ENCODE measurements at regions of chr3 and their contacts with region 1.

Region 1: DNA sequence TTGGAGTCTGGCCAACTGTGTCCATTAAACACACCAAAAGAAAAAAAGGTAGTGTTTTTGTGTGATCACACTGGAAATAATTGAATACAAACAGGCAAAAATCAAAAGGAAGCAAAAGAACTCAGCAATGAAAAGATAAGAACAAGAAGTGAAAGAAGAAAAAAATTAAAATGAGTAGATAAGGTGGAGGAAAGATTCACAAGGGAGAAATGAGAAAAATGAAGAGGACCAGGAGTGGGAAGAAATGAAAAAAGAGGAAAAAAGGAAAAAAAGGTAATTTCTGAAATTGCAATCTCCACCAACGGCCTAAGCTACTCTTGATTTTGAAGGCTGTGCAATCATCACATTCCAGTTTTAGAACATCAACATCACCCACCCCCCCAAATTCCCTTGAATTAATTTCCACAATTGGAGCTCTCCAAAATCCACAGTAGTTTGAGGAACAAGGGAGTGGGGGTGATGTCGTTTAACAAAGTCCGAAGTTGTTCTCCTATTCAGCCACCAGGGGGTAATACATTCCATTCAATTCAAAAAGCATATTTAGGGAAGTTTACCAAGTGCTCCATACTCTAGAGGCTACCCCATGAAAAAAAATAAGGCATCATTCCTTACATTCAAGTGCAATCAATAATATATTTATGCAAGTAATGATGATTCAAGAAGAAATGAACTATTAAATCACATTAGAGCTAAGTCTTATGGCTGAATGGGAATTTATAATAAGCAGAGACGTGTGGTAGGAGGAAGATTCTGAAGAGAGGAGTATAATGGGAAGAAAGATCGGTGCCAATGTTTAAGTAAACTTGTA is 37.4 kb downstream of the ZNF860 start:
- DNase-seq: no peak
- H3K4me3 ChIP-seq: no peak overlapping the region
- H3K27ac ChIP-seq: no peak overlapping the region
- H3K4me1 ChIP-seq: no peaks in the 10 kb centered on the region
- H3K27me3 ChIP-seq: no peaks in the 10 kb centered on the region
- CTCF ChIP-seq: peak; percentile 12 to 69 (median 64)
- EP300 ChIP-seq: no peak
- POLR2A ChIP-seq: no peak

Region 2: DNA sequence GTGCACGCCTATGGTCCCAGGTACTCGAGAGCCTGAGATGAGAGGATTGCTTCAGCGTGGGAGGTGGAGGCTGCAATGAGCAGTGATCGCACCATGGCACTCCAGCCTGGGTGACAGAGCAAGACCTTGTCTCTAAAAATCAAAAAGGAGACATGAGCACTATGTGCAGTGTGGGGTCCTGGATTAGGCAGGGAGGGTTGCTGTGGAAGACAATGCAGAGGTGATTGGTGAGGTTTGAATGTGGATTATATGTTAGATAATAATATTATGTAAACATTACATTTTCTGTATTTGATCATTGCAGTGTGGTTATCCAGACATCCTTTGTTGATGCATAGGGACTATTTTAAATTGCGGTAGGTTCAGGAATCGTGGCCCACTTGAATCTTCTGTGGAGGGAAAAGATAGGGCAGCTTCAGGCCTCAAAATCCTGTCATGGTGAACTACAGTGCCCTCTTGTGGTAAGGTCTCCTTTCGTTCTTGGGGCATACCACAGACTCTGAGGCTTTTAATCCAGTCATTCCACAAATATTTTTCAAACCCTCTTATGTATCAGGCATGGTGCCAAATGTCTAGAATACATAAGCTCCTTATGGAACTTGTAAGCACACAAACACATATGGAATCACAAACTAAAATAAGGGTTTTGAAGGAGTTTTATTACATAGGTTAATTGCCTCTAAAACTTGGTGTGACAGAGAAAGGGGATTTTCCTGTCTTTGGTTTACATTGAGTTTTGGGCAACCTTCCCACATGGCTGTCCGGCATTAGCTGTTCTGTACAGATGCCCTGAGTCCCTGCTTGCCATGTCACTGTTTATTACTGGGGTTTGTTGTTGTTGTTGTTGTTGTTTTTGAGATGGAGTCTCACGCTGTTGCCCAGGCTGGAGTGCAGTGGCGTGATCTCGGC is 125.1 kb after region 1 on chr3:
- intact Hi-C with region 1: loop called in 3 of 4 experiments (anchors 1 to 5 kb)
- DNase-seq: peak in 4 of 5 donors; percentile 22 to 58 (median 31)
- H3K4me3 ChIP-seq: no peak overlapping the region
- H3K27ac ChIP-seq: no peak overlapping the region
- H3K4me1 ChIP-seq: no peaks in the 10 kb centered on the region
- H3K27me3 ChIP-seq: no peaks in the 10 kb centered on the region
- CTCF ChIP-seq: peak; percentile 55 to 63 (median 57)
- EP300 ChIP-seq: no peak
- POLR2A ChIP-seq: no peak

Measured in ovary (tissue), 10 donors.